Ascending aorta (tissue), 2 donors: ENCODE measurements at regions of chr13 and their contacts with region 1.

Region 1: DNA sequence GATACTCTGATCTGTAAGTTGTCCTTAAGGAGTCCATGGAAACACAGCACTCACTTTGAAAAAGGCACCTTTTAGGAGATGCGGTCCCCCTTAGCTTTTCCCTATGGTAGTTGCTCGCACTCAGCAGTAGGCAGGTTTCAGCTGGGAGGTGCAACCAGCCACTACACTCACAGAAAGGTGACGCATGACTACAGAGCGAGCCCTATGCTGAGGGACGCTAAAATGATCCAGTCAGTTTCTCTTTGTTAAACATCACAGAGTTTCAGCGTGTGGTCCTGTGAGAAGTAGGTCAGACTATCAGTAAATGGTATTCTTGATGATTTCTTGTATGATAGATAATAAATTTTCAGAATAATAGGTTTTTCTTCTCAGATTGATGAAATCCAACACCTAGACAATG is 362.7 kb upstream of the MIR17HG start:
- DNase-seq: no peak
- H3K4me3 ChIP-seq: no peak overlapping the region
- H3K27ac ChIP-seq: no peak overlapping the region
- H3K4me1 ChIP-seq: no peaks in the 10 kb centered on the region
- H3K27me3 ChIP-seq: no peaks in the 10 kb centered on the region
- CTCF ChIP-seq: no peak

Region 2: GRCh38 chr13:90997951-90998350 is 13.2 kb after region 1 on chr13:
- intact Hi-C with region 1: loop called (anchors 1 kb)
- DNase-seq: no peak
- H3K4me3 ChIP-seq: no peak overlapping the region
- H3K27ac ChIP-seq: no peak overlapping the region
- H3K4me1 ChIP-seq: no peaks in the 10 kb centered on the region
- H3K27me3 ChIP-seq: no peaks in the 10 kb centered on the region
- CTCF ChIP-seq: no peak